A673 (cell line): ENCODE measurements at regions of chr5 and their contacts with region 1.

Region 1: DNA sequence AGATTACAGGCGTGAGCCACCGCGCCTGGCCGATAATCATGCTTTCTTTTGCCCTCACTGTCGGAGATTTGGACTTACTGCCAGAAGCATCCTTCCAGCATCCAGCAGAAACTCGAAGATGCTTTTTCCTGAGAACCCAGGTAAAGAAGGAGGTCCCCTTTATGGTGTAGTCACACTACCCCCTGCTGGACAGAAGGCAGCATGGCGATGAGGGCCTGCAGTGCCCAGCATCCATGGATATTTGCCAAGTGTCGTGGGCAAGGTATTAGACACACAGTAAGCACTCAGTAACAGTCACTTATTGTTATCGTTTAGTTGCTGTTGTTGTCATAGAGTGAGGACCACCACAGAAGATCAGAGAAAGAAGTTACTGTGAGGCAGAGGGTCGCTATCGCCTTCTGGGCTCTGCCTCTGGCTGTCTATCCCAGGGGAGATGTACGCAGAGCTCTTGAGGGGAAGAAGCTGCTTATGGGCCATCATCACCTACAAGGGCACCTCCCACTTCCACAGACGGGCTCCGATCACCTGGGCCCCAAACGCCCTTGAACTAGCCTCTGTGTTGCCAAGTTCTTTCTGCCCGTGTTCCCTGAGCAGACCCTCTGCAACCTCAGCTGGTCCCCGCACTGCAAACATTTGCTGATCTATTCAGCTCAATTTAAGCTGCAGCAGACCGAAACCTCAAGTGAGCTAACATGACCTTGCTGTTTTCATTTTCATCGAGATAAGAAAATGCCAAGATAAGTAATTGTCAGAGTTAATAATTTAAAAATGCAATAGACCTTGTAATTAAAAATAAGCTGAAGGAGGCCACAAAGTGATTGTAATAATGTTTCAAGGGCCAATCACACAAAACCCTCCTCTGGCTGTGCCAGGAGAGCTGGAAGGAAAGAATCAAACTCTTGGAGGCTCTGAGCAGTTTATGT is 23.9 kb downstream of the C5orf15 start:
- DNase-seq: peak; percentile 87
- H3K4me3 ChIP-seq: no peak overlapping the region
- H3K27ac ChIP-seq: no peak overlapping the region
- H3K4me1 ChIP-seq: no peaks in the 10 kb centered on the region
- H3K27me3 ChIP-seq: no peaks in the 10 kb centered on the region
- CTCF ChIP-seq: peak; percentile 89

Region 2: DNA sequence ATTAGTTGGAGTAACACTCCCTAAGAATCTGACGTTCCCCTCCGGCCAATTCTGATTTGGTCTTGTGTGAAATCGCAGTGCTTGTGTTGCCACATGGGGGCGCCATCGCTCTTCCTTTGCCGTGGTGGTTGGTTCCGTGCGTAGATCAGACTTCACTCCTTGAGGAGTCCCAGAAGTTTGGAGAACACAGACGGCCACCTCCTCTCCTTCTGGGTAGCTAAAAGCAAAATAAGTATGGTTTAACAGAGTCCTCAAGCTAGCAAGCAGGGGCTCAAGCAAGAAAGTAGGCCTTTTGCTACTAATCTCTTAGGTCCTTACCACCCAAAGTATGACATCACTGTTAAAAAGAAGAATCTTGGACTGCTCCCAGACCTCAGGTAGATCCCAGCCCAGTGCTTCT is 833.2 kb before region 1 on chr5:
- CTCF ChIA-PET with region 1: no interaction called
- POLR2A ChIA-PET with region 1: no interaction called
- intact Hi-C with region 1: loop called (anchors 5 kb)
- DNase-seq: peak; percentile 84
- H3K4me3 ChIP-seq: no peak overlapping the region
- H3K27ac ChIP-seq: no peak overlapping the region
- H3K4me1 ChIP-seq: no peaks in the 10 kb centered on the region
- H3K27me3 ChIP-seq: no peaks in the 10 kb centered on the region
- CTCF ChIP-seq: peak; percentile 98

Region 3: GRCh38 chr5:133423618-133424282 is 520.8 kb before region 1 on chr5:
- CTCF ChIA-PET with region 1: interaction called, 4 read pairs
- POLR2A ChIA-PET with region 1: no interaction called
- intact Hi-C with region 1: loop called (anchors 2 kb)
- DNase-seq: peak; percentile 49
- H3K4me3 ChIP-seq: no peak overlapping the region
- H3K27ac ChIP-seq: no peak overlapping the region
- H3K4me1 ChIP-seq: peaks cover 17% of the 10 kb centered on the region
- H3K27me3 ChIP-seq: no peaks in the 10 kb centered on the region
- CTCF ChIP-seq: peak; percentile 92

Region 4: DNA sequence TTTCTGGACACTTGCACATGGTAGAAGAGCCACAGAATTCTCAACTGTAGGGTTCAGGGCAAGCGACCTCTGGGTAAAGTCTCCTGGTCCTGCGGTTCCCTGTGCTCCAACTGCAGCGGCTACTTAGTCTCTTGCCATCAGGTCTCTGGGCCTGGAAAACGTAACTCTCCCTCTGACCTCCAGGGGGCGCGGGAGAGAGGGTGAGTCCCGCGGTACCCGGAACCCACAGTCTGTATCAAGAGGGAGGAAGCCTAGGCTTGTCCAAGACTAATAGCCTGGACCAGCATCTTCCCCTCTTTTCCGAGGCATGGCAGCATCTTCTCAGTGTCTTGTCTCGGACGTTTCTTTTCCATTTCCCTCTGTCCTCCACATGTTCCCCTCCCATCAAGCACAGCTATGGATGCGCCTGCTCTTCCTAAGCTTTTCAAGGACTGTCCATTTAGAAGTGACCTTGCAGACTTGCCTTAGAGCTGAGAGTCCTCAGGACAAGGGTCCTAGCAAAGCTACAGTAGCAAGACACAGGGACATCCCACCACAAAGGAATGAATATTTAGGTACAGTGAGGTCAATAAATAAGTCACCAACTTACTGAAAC is 391.5 kb before region 1 on chr5:
- CTCF ChIA-PET with region 1: no interaction called
- POLR2A ChIA-PET with region 1: no interaction called
- intact Hi-C with region 1: loop called (anchors 5 kb)
- DNase-seq: peak; percentile 76
- H3K4me3 ChIP-seq: no peak overlapping the region
- H3K27ac ChIP-seq: no peak overlapping the region
- H3K4me1 ChIP-seq: no peaks in the 10 kb centered on the region
- H3K27me3 ChIP-seq: peaks cover 18% of the 10 kb centered on the region
- CTCF ChIP-seq: peak; percentile 84

Region 5: DNA sequence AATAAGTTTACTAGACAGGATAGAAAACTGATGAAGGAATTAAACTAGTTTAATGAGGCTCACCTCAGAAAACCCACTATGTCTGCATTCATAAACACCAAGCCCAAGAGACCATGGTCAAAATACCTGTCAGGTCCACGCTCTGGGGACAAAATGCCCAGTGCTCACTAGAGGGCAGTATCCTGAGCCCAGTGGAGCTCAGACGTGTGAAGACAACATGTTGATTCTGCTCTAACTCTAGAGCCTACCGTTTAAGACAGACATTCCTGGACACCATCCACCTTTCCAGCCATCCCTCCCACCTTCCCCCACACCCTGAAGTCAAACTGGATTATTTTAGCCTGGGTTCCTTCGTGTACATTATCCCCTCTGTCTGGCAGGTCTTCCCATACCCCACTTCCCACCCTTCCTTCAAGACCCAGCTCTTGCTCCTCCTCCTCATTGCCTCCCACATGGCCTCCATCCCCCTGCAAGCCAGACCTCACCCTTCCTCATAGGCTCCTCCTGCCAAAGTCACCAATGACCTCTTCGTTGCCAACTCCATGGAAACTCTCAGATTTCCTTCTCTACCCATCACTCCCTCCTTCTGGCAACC is 189.9 kb before region 1 on chr5:
- CTCF ChIA-PET with region 1: no interaction called
- POLR2A ChIA-PET with region 1: no interaction called
- intact Hi-C with region 1: loop called (anchors 10 kb)
- DNase-seq: peak; percentile 41
- H3K4me3 ChIP-seq: no peak overlapping the region
- H3K27ac ChIP-seq: no peak overlapping the region
- H3K4me1 ChIP-seq: no peaks in the 10 kb centered on the region
- H3K27me3 ChIP-seq: no peaks in the 10 kb centered on the region
- CTCF ChIP-seq: peak; percentile 77

Region 6: DNA sequence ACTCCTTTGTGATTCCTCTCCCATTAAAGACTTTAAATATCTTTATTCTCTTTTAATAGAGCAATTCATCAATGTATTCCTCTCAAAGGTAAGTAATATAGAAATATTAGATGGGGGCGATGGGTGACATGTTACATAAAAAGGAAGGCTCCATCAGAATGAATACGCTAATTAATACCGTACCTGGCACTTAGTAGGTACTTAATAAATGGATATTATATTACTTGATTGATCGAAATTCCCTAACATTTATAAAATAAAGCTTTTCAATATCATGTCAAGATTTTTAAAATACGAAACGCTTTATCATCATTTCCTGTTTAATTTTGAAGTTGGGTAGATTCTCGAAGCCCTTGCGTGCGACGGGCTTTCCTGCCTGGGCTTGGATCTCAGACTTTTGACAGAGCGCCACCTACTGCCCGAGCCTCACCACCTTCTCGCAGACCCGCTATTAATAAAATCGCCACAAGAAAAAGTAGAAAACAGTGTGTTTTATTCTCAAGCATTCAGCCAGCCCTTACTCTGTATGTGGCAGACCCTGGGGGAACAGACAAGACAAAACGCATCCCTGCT is 75.5 kb before region 1 on chr5:
- CTCF ChIA-PET with region 1: no interaction called
- POLR2A ChIA-PET with region 1: no interaction called
- intact Hi-C with region 1: loop called (anchors 5 kb)
- DNase-seq: peak; percentile 89
- H3K4me3 ChIP-seq: no peak overlapping the region
- H3K27ac ChIP-seq: peak overlapping the region; percentile 91
- H3K4me1 ChIP-seq: peaks cover 76% of the 10 kb centered on the region
- H3K27me3 ChIP-seq: no peaks in the 10 kb centered on the region
- CTCF ChIP-seq: peak; percentile 95